ENCODE measurements at regions of chr15 and their contacts with region 1.

Region 1: DNA sequence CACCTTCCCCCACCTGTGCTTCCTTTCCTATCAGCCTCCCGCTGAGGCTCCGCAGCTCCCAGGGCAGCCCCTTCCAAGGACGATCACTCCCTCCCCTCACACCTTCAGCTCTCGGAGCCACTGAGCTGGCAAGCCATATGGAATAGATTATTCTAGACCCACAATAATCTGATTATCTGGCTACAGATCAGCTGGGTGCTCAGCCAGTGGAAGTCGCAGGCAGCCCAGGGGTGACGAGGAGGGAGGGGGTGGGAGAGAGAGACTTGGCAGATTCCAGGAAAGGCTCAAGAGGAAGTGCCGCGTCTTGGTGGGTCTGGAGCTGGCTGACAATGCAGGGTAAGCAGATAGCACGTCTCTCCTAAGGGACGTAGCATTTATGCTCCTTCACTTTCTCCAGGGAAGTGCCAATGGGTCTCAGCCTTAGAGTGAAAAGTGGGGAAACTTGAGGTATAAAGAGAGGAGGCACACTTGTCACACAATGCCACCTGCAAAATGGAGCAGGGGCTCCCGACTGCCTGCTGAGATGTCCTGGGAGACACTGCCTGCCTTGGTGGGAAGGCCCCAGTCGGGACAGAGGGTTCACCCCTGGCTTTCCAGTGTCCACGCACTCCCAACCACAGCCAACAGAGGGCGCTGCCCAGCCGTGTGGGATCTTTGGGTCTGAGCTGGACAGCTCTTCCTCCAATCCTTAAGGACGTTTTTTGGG is 9.4 kb upstream of the MESP1 start:
- DNase-seq: peak; percentile 71
- H3K4me3 ChIP-seq: no peak overlapping the region
- H3K27ac ChIP-seq: no peak overlapping the region
- H3K4me1 ChIP-seq: no peaks in the 10 kb centered on the region
- H3K27me3 ChIP-seq: peaks cover 0 to 5% of the 10 kb centered on the region in 2 experiments
- CTCF ChIP-seq: peak; percentile 93 to 98
- POLR2A ChIP-seq: no peak

Region 2: GRCh38 chr15:89526601-89527441 is 233.6 kb before region 1 on chr15:
- CTCF ChIA-PET with region 1: no interaction called
- POLR2A ChIA-PET with region 1: no interaction called
- dilution Hi-C with region 1: no loop called
- intact Hi-C with region 1: no loop called
- DNase-seq: no peak
- H3K4me3 ChIP-seq: no peak overlapping the region
- H3K27ac ChIP-seq: no peak overlapping the region
- H3K4me1 ChIP-seq: no peaks in the 10 kb centered on the region
- H3K27me3 ChIP-seq: peaks cover 4 to 6% of the 10 kb centered on the region in 2 experiments
- CTCF ChIP-seq: no peak
- POLR2A ChIP-seq: no peak

Region 3: GRCh38 chr15:89776274-89777072 is 16.0 kb after region 1 on chr15 and contains the start of gene MESP2:
- CTCF ChIA-PET with region 1: interaction called, 38 read pairs
- POLR2A ChIA-PET with region 1: no interaction called
- dilution Hi-C with region 1: no loop called
- intact Hi-C with region 1: no loop called
- DNase-seq: peak; percentile 88
- H3K4me3 ChIP-seq: peak within 1 kb of the TSS in 2 of 3 experiments; percentile 4 to 30
- H3K27ac ChIP-seq: no peak within 1 kb of the TSS
- H3K4me1 ChIP-seq: peaks cover 6% of the 10 kb centered on the region
- H3K27me3 ChIP-seq: no peaks in the 10 kb centered on the region
- CTCF ChIP-seq: peak; percentile 55 to 73
- POLR2A ChIP-seq: no peak
- total RNA-seq, gene MESP2: 0.42 TPM in 1 of 2 replicates, not detected in the other

Region 4: GRCh38 chr15:89802231-89802928 is 41.9 kb after region 1 on chr15:
- CTCF ChIA-PET with region 1: interaction called, 10 read pairs
- POLR2A ChIA-PET with region 1: interaction called, 3 read pairs
- dilution Hi-C with region 1: no loop called
- intact Hi-C with region 1: no loop called
- DNase-seq: peak; percentile 66
- H3K4me3 ChIP-seq: no peak overlapping the region
- H3K27ac ChIP-seq: peak overlapping the region; percentile 65
- H3K4me1 ChIP-seq: peaks cover 17% of the 10 kb centered on the region
- H3K27me3 ChIP-seq: no peaks in the 10 kb centered on the region
- CTCF ChIP-seq: no peak
- POLR2A ChIP-seq: peak; percentile 56

Region 5: GRCh38 chr15:89836255-89837133 is 76.0 kb after region 1 on chr15:
- CTCF ChIA-PET with region 1: interaction called, 17 read pairs
- POLR2A ChIA-PET with region 1: no interaction called
- dilution Hi-C with region 1: no loop called
- intact Hi-C with region 1: no loop called
- DNase-seq: no peak
- H3K4me3 ChIP-seq: no peak overlapping the region
- H3K27ac ChIP-seq: peak overlapping the region; percentile 2
- H3K4me1 ChIP-seq: peaks cover 18% of the 10 kb centered on the region
- H3K27me3 ChIP-seq: no peaks in the 10 kb centered on the region
- CTCF ChIP-seq: no peak
- POLR2A ChIP-seq: no peak

Region 6: DNA sequence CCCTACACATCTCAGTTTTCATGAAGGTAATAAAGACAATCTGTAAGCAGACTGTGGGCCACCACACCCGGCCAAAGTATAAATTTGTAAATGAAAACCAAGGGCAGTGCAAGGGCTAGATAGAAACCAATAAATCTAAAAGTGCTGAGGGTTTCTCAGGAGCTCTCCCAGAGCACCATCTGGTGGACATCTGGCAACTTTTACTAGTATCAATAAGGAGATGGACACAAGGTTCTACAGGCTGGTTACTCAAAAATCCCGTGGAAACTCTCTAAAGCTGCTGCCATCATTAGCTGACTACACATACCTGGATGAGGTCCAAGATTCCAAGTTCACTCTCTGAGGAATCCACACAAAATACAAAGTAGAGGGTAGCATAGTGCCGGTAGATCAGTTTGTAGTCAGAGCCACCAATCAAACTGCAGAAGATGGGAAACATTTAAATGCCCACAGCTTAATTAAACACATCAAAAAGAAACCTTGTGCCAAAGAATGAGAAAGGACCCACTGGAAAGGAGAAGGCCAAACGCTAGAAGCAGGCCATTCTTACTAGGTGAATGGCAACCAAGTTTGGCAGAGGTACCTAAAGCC is 127.9 kb after region 1 on chr15:
- CTCF ChIA-PET with region 1: interaction called, 210 read pairs
- POLR2A ChIA-PET with region 1: no interaction called
- dilution Hi-C with region 1: no loop called
- intact Hi-C with region 1: loop called (anchors 1 kb)
- DNase-seq: peak; percentile 56
- H3K4me3 ChIP-seq: no peak overlapping the region
- H3K27ac ChIP-seq: no peak overlapping the region
- H3K4me1 ChIP-seq: peaks cover 5% of the 10 kb centered on the region
- H3K27me3 ChIP-seq: no peaks in the 10 kb centered on the region
- CTCF ChIP-seq: peak; percentile 38 to 55
- POLR2A ChIP-seq: no peak

Region 7: DNA sequence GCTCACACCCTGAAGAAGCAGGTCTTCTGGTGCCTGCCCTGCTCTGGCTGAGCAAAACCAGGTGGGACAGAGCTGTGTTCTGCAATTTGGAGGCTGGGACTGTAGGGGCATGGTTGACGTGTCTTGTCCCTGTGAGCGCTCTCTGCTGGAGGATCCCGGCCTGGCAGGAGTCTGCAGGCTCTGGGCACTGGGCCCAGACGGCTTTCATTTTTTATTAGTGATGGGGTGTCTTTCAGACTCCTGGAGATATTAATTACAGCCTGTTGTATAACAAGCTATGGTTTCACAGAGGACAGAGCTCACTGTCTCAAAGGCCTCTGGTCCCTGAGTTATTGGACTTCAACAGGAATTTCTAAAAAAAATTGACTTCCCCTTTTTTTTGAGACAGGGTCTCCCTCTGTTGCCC is 211.1 kb after region 1 on chr15:
- CTCF ChIA-PET with region 1: interaction called, 17 read pairs
- POLR2A ChIA-PET with region 1: no interaction called
- dilution Hi-C with region 1: no loop called
- intact Hi-C with region 1: no loop called
- DNase-seq: peak; percentile 29
- H3K4me3 ChIP-seq: no peak overlapping the region
- H3K27ac ChIP-seq: no peak overlapping the region
- H3K4me1 ChIP-seq: no peaks in the 10 kb centered on the region
- H3K27me3 ChIP-seq: peaks cover 0 to 4% of the 10 kb centered on the region in 2 experiments
- CTCF ChIP-seq: peak; percentile 40 to 64
- POLR2A ChIP-seq: no peak

Measured in endothelial cell of umbilical vein (primary cell).